Posterior vena cava (tissue), 2 donors: ENCODE measurements at regions of chr3 and their contacts with region 1.

Region 1: DNA sequence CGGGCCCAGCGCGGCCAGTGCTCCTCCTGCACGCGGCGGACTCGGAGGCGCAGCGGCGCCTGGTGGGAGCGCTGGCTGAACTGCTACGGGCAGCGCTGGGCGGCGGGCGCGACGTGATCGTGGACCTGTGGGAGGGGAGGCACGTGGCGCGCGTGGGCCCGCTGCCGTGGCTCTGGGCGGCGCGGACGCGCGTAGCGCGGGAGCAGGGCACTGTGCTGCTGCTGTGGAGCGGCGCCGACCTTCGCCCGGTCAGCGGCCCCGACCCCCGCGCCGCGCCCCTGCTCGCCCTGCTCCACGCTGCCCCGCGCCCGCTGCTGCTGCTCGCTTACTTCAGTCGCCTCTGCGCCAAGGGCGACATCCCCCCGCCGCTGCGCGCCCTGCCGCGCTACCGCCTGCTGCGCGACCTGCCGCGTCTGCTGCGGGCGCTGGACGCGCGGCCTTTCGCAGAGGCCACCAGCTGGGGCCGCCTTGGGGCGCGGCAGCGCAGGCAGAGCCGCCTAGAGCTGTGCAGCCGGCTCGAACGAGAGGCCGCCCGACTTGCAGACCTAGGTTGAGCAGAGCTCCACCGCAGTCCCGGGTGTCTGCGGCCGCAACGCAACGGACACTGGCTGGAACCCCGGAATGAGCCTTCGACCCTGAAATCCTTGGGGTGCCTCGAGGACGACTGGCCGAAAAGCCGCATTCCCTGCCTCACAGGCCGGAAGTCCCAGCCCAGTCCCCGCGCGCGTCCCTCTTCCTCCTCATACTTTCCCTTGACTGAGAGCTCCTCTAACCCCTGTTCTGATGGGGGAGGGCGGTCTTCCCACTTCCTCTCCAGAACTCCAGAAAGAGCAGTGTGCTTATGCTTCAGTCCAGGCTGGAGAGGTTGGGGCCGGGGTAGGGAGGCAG is 1.4 kb upstream of the IL17RC start:
- DNase-seq: peak; percentile 92

Region 2: GRCh38 chr3:9843715-9844438 is 71.6 kb before region 1 on chr3 and contains the start of gene RPUSD3:
- intact Hi-C with region 1: loop called (anchors 5 kb)
- DNase-seq: peak; percentile 100
- total RNA-seq, gene RPUSD3: 18.2 to 20.0 TPM

Region 3: GRCh38 chr3:9902372-9903237 is 12.9 kb before region 1 on chr3 and contains the start of gene IL17RE:
- intact Hi-C with region 1: no loop called
- DNase-seq: peak; percentile 54
- total RNA-seq, gene IL17RE: 9.6 to 10.0 TPM